ENCODE measurements at regions of chr2 and their contacts with region 1.

Region 1: DNA sequence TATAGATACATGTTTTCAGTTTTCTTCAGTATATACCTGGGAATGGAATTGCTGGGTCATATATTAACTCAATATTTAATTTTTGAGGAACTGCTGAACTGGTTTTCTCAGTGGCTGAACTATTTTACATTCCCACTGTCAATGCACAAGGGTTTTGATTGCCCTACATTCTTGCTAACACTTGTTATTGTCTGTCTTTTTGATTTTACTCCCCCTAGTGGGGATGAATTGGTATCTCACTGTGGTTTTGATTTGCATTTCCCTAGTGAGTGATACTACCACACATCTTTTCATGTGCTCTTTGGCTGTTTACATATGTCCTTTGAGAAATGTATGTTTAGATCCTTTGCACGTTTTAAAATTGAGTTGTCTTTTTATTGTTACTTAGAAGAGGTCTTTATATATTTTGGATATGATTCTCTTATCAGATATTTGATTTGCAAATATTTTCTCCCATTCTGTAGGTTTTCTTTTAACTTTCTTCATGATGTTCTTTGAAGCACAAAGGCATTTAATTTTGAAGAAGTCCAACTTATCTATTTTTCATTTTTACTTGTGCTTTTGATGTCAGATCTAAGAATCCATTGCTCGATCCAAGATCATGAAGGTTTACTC is 36.2 kb downstream of the ASB1 start:
- DNase-seq: no peak
- H3K4me3 ChIP-seq: no peak overlapping the region
- H3K27ac ChIP-seq: no peak overlapping the region
- H3K4me1 ChIP-seq: peaks cover 0 to 13% (median 4%) of the 10 kb centered on the region in 4 donors
- H3K27me3 ChIP-seq: no peaks in the 10 kb centered on the region
- CTCF ChIP-seq: peak; percentile 67 to 83 (median 70)
- EP300 ChIP-seq: no peak
- POLR2A ChIP-seq: no peak

Region 2: DNA sequence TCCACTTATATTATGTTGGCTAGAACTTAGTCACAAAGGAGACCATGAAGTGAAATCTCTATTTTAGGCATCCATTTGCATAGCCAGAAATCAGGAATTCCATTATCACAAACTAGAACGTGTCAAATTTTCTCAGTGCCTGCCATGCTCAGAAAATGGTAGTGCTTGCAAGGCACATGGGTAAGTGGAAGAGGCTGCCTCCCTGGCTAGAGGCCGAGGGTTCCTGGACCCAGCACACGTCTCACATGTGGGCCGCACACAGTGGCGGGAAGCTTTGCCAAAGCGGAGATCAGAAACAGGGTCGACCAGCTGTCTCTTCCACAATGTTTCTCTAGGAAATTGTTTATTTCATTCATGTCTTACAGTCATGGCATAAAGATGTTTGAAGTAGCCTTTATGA is 100.3 kb before region 1 on chr2:
- in situ Hi-C with region 1: loop called in 2 of 4 experiments (anchors 5 kb)
- intact Hi-C with region 1: no loop called
- DNase-seq: no peak
- H3K4me3 ChIP-seq: no peak overlapping the region
- H3K27ac ChIP-seq: no peak overlapping the region
- H3K4me1 ChIP-seq: peaks cover 0 to 8% (median under 1%) of the 10 kb centered on the region in 4 donors
- H3K27me3 ChIP-seq: no peaks in the 10 kb centered on the region
- CTCF ChIP-seq: no peak
- EP300 ChIP-seq: no peak
- POLR2A ChIP-seq: no peak

Region 3: DNA sequence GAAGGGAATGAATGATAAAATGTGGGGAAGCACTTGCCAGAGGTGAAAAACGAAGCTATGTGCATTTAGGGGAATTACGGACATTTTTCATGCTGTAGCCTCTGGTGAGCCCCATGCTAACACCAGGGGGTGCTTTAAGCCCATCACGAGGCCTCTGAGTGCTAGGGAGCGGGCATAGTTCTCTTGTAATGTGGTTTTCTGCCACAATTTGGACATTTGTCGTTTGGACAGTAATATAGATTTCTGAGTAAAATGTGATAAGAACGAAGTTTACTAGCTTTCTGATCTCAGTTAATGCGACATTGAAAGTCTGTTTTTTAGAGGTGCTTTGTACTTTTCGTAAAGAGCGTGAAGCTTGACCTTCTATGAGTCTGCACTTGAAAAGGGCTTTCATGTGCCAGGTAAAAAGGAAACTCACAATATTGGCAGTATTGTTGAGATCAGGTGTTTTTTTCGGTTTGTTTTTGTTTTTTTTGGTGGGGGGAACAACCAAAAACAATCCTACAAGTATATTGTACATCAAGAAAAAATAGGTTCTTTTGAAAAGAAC is 92.0 kb before region 1 on chr2:
- in situ Hi-C with region 1: loop called in 1 of 4 experiments (anchors 5 kb)
- intact Hi-C with region 1: no loop called
- DNase-seq: peak; percentile 67
- H3K4me3 ChIP-seq: no peak overlapping the region
- H3K27ac ChIP-seq: no peak overlapping the region
- H3K4me1 ChIP-seq: no peaks in the 10 kb centered on the region
- H3K27me3 ChIP-seq: no peaks in the 10 kb centered on the region
- CTCF ChIP-seq: peak; percentile 68 to 79 (median 72)
- EP300 ChIP-seq: no peak
- POLR2A ChIP-seq: no peak